Caco-2 (cell line): ENCODE measurements at regions of chr12 and their contacts with region 1.

Region 1: GRCh38 chr12:88052686-88053085 is 23.5 kb upstream of the C12orf50 start:
- DNase-seq: peak; percentile 40 to 59
- H3K4me3 ChIP-seq: no peak overlapping the region
- H3K4me3 Mint-ChIP-seq: no peak overlapping the region
- H3K27ac Mint-ChIP-seq: no peak overlapping the region
- H3K4me1 ChIP-seq: no peaks in the 10 kb centered on the region
- H3K4me1 Mint-ChIP-seq: no peaks in the 10 kb centered on the region
- H3K27me3 ChIP-seq: no peaks in the 10 kb centered on the region
- H3K27me3 Mint-ChIP-seq: no peaks in the 10 kb centered on the region
- CTCF ChIP-seq: peak; percentile 61 to 72

Region 2: GRCh38 chr12:87866578-87867292 is 186.0 kb before region 1 on chr12:
- CTCF ChIA-PET with region 1: no interaction called
- POLR2A ChIA-PET with region 1: no interaction called
- intact Hi-C with region 1: loop called (anchors 1 kb)
- DNase-seq: peak in 1 of 2 experiments; percentile 28
- H3K4me3 ChIP-seq: no peak overlapping the region
- H3K4me3 Mint-ChIP-seq: no peak overlapping the region
- H3K27ac Mint-ChIP-seq: no peak overlapping the region
- H3K4me1 ChIP-seq: no peaks in the 10 kb centered on the region
- H3K4me1 Mint-ChIP-seq: no peaks in the 10 kb centered on the region
- H3K27me3 ChIP-seq: no peaks in the 10 kb centered on the region
- H3K27me3 Mint-ChIP-seq: no peaks in the 10 kb centered on the region
- CTCF ChIP-seq: peak; percentile 42 to 71

Region 3: GRCh38 chr12:87953256-87953860 is 99.3 kb before region 1 on chr12:
- CTCF ChIA-PET with region 1: no interaction called
- POLR2A ChIA-PET with region 1: no interaction called
- intact Hi-C with region 1: loop called (anchors 1 kb)
- DNase-seq: peak in 1 of 2 experiments; percentile 9
- H3K4me3 ChIP-seq: no peak overlapping the region
- H3K4me3 Mint-ChIP-seq: no peak overlapping the region
- H3K27ac Mint-ChIP-seq: no peak overlapping the region
- H3K4me1 ChIP-seq: no peaks in the 10 kb centered on the region
- H3K4me1 Mint-ChIP-seq: no peaks in the 10 kb centered on the region
- H3K27me3 ChIP-seq: no peaks in the 10 kb centered on the region
- H3K27me3 Mint-ChIP-seq: no peaks in the 10 kb centered on the region
- CTCF ChIP-seq: peak; percentile 33 to 61

Region 4: GRCh38 chr12:87995581-87996178 is 57.0 kb before region 1 on chr12:
- CTCF ChIA-PET with region 1: no interaction called
- POLR2A ChIA-PET with region 1: no interaction called
- intact Hi-C with region 1: loop called (anchors 1 kb)
- DNase-seq: peak; percentile 65 to 66
- H3K4me3 ChIP-seq: no peak overlapping the region
- H3K4me3 Mint-ChIP-seq: no peak overlapping the region
- H3K27ac Mint-ChIP-seq: no peak overlapping the region
- H3K4me1 ChIP-seq: no peaks in the 10 kb centered on the region
- H3K4me1 Mint-ChIP-seq: no peaks in the 10 kb centered on the region
- H3K27me3 ChIP-seq: no peaks in the 10 kb centered on the region
- H3K27me3 Mint-ChIP-seq: peaks cover 6% of the 10 kb centered on the region
- CTCF ChIP-seq: peak; percentile 71 to 77

Region 5: GRCh38 chr12:88035907-88036289 is 16.8 kb before region 1 on chr12:
- CTCF ChIA-PET with region 1: no interaction called
- POLR2A ChIA-PET with region 1: no interaction called
- intact Hi-C with region 1: loop called (anchors 1 kb)
- DNase-seq: no peak
- H3K4me3 ChIP-seq: peak overlapping the region; percentile 90
- H3K4me3 Mint-ChIP-seq: peak overlapping the region; percentile 89
- H3K27ac Mint-ChIP-seq: peak overlapping the region; percentile 70
- H3K4me1 ChIP-seq: 0 out of 2 replicates have a peak, but pooled peaks cover 12% of the 10 kb centered on the region
- H3K4me1 Mint-ChIP-seq: peaks cover 9% of the 10 kb centered on the region
- H3K27me3 ChIP-seq: no peaks in the 10 kb centered on the region
- H3K27me3 Mint-ChIP-seq: no peaks in the 10 kb centered on the region
- CTCF ChIP-seq: no peak